ENCODE measurements at regions of chr11 and their contacts with region 1.

Region 1: GRCh38 chr11:27506200-27507182 is at the start of gene LIN7C:
- DNase-seq: peak; percentile 98
- ATAC-seq: peak; percentile 94
- H3K4me3 Mint-ChIP-seq: peak within 1 kb of the TSS; percentile 100
- H3K27ac Mint-ChIP-seq: peak within 1 kb of the TSS; percentile 100
- H3K4me1 Mint-ChIP-seq: peaks cover 39% of the 10 kb centered on the region
- H3K27me3 Mint-ChIP-seq: no peaks in the 10 kb centered on the region
- CTCF ChIP-seq: no peak
- total RNA-seq, gene LIN7C: 26.9 to 28.9 TPM

Region 2: GRCh38 chr11:28107748-28108618 is 601.5 kb after region 1 on chr11 and contains the starts of genes KIF18A and METTL15:
- CTCF ChIA-PET with region 1: no interaction called
- POLR2A ChIA-PET with region 1: no interaction called
- intact Hi-C with region 1: loop called (anchors 5 kb)
- DNase-seq: peak; percentile 99
- ATAC-seq: peak; percentile 92
- H3K4me3 Mint-ChIP-seq: peak within 1 kb of the TSS; percentile 98
- H3K27ac Mint-ChIP-seq: peak within 1 kb of the TSS; percentile 99
- H3K4me1 Mint-ChIP-seq: peaks cover 36% of the 10 kb centered on the region
- H3K27me3 Mint-ChIP-seq: no peaks in the 10 kb centered on the region
- CTCF ChIP-seq: no peak
- total RNA-seq, gene KIF18A: 22.3 to 23.2 TPM
- total RNA-seq, gene METTL15: 19.4 to 20.4 TPM